ENCODE measurements at regions of chr20 and their contacts with region 1.

Region 1: GRCh38 chr20:63641792-63642544 is 11.3 kb downstream of the STMN3 start:
- DNase-seq: peak; percentile 98
- ATAC-seq: peak; percentile 68
- H3K4me3 Mint-ChIP-seq: peak overlapping the region; percentile 70
- H3K27ac Mint-ChIP-seq: peak overlapping the region; percentile 70
- H3K4me1 Mint-ChIP-seq: peaks cover 24% of the 10 kb centered on the region
- H3K27me3 Mint-ChIP-seq: no peaks in the 10 kb centered on the region

Region 2: GRCh38 chr20:63537525-63538203 is 104.3 kb before region 1 on chr20:
- POLR2A ChIA-PET with region 1: interaction called, 13 read pairs
- DNase-seq: peak; percentile 96
- ATAC-seq: peak; percentile 96
- H3K4me3 Mint-ChIP-seq: peak overlapping the region; percentile 76
- H3K27ac Mint-ChIP-seq: peak overlapping the region; percentile 93
- H3K4me1 Mint-ChIP-seq: no peaks in the 10 kb centered on the region
- H3K27me3 Mint-ChIP-seq: no peaks in the 10 kb centered on the region

Region 3: DNA sequence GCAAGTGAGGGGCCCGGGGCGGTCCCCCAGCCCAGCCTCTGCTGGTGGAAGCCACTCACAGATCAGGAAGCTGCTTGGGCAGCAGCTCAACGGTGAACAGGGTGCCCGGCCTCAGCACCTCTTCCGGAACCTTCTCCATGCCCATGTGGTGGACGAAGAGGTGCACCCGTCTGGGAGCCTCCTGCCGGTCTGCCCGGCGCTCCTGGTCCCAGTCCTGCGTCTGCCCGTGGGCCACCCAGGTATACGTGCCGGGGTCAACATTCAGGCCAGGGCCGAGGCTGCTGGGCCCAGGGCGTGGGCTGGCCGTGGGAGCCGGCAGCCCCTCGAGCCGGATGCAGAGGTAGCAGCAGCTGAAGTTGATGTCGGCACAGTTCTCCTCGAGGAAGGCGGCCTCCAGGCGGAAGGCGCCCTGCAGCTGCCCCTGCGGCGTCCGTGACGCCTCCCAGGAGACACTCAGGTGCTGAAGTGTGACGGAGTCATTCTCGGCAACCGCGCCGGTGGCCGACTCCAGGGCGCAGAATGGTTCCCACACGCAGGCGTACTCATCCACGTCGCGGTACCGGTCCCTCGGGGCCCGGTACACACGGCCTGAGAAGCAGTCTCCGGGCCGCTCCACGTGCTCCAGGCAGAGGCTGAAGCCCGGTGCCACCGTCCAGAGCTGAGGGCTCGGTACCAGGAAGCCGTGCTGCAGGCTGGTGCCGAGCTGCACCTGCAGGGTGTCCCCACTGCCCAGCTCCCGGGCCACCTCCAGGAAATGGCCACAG is 79.3 kb before region 1 on chr20:
- POLR2A ChIA-PET with region 1: no interaction called
- DNase-seq: no peak
- ATAC-seq: no peak
- H3K4me3 Mint-ChIP-seq: no peak overlapping the region
- H3K27ac Mint-ChIP-seq: no peak overlapping the region
- H3K4me1 Mint-ChIP-seq: peaks cover 5% of the 10 kb centered on the region
- H3K27me3 Mint-ChIP-seq: no peaks in the 10 kb centered on the region

Region 4: GRCh38 chr20:63574156-63574828 is 67.7 kb before region 1 on chr20 and contains the start of gene HELZ2:
- POLR2A ChIA-PET with region 1: interaction called, 10 read pairs
- DNase-seq: peak; percentile 77
- ATAC-seq: peak; percentile 88
- H3K4me3 Mint-ChIP-seq: peak within 1 kb of the TSS; percentile 91
- H3K27ac Mint-ChIP-seq: peak within 1 kb of the TSS; percentile 95
- H3K4me1 Mint-ChIP-seq: no peaks in the 10 kb centered on the region
- H3K27me3 Mint-ChIP-seq: peaks cover 19% of the 10 kb centered on the region
- total RNA-seq, gene HELZ2: 118 to 128 TPM

Region 5: DNA sequence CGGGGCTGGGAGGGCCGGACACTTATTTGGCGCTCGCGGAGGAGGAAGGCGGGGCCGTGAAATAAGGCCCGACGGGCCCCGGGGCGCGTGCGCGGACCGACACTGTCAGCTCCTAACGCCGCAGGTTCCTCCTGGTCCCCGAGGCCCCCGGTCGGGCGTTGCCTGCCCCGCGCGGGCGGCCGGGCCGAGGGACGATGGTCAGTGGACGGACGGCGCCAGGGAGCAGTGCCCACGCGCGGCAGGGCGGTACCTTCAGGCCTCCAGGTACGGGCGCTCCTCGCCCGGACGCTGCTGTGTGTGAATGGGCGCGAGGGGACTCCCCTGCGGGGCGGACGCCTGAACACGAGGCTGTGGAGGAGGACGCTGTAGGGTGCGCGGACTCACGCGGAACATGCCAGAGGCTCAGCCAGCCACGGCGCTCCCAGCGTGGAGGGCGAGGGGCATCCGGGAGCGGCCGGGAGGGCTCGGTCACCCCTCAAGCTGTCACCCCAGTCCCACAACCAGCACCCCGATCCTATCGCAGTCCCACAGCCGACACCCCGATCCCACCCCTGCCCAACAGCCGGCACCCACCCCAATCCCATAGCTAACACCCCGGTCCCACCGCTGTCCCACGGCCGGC is 14.7 kb before region 1 on chr20:
- POLR2A ChIA-PET with region 1: interaction called, 109 read pairs
- DNase-seq: peak; percentile 97
- ATAC-seq: peak; percentile 85
- H3K4me3 Mint-ChIP-seq: peak overlapping the region; percentile 98
- H3K27ac Mint-ChIP-seq: peak overlapping the region; percentile 96
- H3K4me1 Mint-ChIP-seq: peaks cover 23% of the 10 kb centered on the region
- H3K27me3 Mint-ChIP-seq: no peaks in the 10 kb centered on the region

Region 6: DNA sequence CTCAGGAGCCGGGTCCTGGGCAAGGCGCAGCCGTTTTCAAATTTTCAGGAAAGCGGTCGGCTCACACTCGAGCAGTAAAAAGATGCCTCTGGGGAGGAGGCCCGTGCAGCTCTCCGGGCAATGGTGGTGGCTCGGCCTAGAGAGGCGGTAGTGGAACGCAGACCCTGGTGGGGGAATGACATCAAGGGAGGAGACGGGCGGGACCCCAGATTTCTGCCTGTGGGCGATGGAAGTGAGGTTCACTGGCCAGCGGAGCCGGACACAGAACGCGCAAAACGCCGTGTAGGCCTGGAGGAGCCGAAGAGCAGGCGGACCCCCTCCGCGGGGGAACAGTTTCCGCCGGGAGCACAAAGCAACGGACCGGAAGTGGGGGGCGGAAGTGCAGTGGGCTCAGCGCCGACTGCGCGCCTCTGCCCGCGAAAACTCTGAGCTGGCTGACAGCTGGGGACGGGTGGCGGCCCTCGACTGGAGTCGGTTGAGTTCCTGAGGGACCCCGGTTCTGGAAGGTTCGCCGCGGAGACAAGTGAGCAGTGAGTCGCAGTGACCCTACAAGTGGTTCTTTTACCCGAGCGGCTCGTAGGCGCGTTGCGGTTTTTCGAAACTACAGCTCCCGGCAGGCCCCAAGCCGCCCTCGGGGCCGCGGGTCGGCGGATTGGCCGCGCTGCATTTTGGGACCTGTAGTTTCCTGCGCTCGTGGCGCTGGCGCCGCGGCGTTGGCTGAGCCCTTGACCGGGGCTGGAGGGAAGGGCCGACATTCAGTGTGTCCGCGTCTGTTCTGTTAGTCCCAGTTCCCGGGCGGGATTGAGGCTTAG is 16.2 kb after region 1 on chr20 and contains the start of gene RTEL1:
- POLR2A ChIA-PET with region 1: interaction called, 16 read pairs
- DNase-seq: peak; percentile 97
- ATAC-seq: peak; percentile 82
- H3K4me3 Mint-ChIP-seq: peak within 1 kb of the TSS; percentile 95
- H3K27ac Mint-ChIP-seq: peak within 1 kb of the TSS; percentile 92
- H3K4me1 Mint-ChIP-seq: peaks cover 17% of the 10 kb centered on the region
- H3K27me3 Mint-ChIP-seq: no peaks in the 10 kb centered on the region
- total RNA-seq, gene RTEL1: 41.3 to 41.5 TPM

Region 7: DNA sequence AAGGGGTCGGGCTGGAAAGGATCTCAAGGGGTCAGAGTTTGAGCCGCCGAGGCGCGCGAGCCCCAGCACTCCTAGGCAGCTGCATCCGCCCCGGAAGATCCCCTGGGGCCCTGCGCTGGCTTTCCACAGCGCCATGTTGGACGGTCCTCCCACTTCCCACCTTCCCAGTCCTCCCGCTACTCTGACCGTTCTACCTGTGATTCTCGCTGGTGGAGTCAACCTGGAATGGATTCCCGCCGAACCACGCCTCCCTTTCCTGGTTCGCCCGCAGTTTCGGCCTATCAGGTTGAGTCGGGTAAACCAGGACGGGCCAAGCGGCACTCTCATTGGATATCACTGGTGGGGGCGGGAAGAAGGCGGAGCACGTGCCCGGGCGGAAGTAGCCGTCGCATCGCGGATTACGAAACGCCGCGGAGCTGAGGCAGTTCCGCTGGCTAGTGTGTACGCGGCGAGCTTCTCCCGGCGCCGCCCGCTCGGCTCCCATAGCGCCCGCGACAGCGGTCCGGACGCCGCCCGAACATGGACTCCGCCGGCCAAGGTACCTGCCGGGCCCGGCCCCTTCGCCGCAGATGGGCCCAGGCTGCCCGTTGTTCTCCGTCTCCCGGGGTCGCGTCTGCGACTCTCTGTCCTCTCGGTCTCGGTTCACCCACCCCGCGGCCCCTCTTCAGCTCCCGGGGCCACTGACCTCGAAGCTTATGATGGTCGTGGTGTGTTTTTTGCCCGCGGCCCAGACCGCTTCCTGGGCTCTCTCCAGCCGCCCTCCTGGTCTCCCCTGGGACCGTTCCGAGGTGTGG is 223.1 kb after region 1 on chr20 and contains the start of gene TPD52L2:
- POLR2A ChIA-PET with region 1: interaction called, 10 read pairs
- DNase-seq: peak; percentile 95
- ATAC-seq: peak; percentile 83
- H3K4me3 Mint-ChIP-seq: peak within 1 kb of the TSS; percentile 100
- H3K27ac Mint-ChIP-seq: peak within 1 kb of the TSS; percentile 98
- H3K4me1 Mint-ChIP-seq: peaks cover 15% of the 10 kb centered on the region
- H3K27me3 Mint-ChIP-seq: no peaks in the 10 kb centered on the region
- total RNA-seq, gene TPD52L2: 37.9 to 39.5 TPM

Measured in activated naive CD8-positive, alpha-beta T cell treated with anti-CD3 and anti-CD28 coated beads, Interleukin-2, amount 10 ng/mL, durations not matched to agents 7 days and 5 days (primary cell).